ENCODE measurements at regions of chr10 and their contacts with region 1.

Region 1: GRCh38 chr10:6151087-6151977 is 51.4 kb upstream of the PFKFB3 start:
- DNase-seq: peak; percentile 51
- ATAC-seq: peak; percentile 86
- H3K4me3 ChIP-seq: peak overlapping the region; percentile 9
- H3K27ac ChIP-seq: peak overlapping the region; percentile 8; the same call in 1 of the 2 replicates
- H3K4me1 ChIP-seq: peaks cover 25% of the 10 kb centered on the region
- H3K27me3 ChIP-seq: no peaks in the 10 kb centered on the region
- CTCF ChIP-seq: peak; percentile 71 to 82 (median 81)
- EP300 ChIP-seq: no peak
- POLR2A ChIP-seq: no peak
- RAD21 ChIP-seq: peak; percentile 61

Region 2: GRCh38 chr10:6108603-6109443 is 42.5 kb before region 1 on chr10:
- CTCF ChIA-PET with region 1: interaction called, 53 read pairs
- POLR2A ChIA-PET with region 1: no interaction called
- RAD21 ChIA-PET with region 1: interaction called, 9 read pairs
- SMC1A ChIA-PET with region 1: interaction called, 28 read pairs
- in situ Hi-C with region 1: loop called (anchors 5 kb)
- intact Hi-C with region 1: loop called (anchors 1 kb)
- DNase-seq: no peak
- ATAC-seq: peak; percentile 72
- H3K4me3 ChIP-seq: no peak overlapping the region
- H3K27ac ChIP-seq: no peak overlapping the region
- H3K4me1 ChIP-seq: no peaks in the 10 kb centered on the region
- H3K27me3 ChIP-seq: no peaks in the 10 kb centered on the region
- CTCF ChIP-seq: peak; percentile 50 to 77 (median 74); a peak in 5 of 6 replicates
- EP300 ChIP-seq: no peak
- POLR2A ChIP-seq: no peak
- RAD21 ChIP-seq: peak; percentile 79

Region 3: DNA sequence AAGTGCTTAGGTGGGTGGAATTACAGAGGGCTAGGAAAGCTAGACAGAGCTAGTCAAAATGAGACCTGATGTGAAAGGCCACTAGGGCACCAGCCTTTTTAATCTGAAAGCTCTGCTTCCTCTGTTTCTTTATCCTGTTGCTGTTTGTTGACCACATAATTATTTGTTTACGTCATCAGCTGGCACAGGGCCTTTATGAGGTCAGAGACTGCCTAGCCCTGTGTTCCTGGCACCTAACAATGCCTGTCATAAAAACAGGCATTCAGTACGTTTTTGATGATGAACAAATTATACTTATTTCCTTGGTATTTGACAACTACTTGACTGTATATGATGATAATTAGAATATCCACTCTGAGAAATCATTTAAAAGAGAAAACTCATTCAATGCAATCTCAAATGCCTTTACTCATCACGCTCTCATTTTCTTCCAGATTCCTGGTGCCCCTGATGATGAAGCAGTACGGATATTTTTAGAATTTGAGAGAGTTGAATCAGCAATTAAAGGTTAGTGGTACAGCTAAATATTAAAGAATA is 36.5 kb before region 1 on chr10:
- CTCF ChIA-PET with region 1: interaction called, 53 read pairs
- POLR2A ChIA-PET with region 1: no interaction called
- RAD21 ChIA-PET with region 1: interaction called, 9 read pairs
- SMC1A ChIA-PET with region 1: interaction called, 28 read pairs
- in situ Hi-C with region 1: loop called (anchors 5 kb)
- intact Hi-C with region 1: no loop called
- DNase-seq: no peak
- ATAC-seq: peak; percentile 74
- H3K4me3 ChIP-seq: no peak overlapping the region
- H3K27ac ChIP-seq: no peak overlapping the region
- H3K4me1 ChIP-seq: no peaks in the 10 kb centered on the region
- H3K27me3 ChIP-seq: no peaks in the 10 kb centered on the region
- CTCF ChIP-seq: no peak
- EP300 ChIP-seq: no peak
- POLR2A ChIP-seq: no peak
- RAD21 ChIP-seq: no peak

Region 4: GRCh38 chr10:6128591-6129251 is 22.6 kb before region 1 on chr10:
- CTCF ChIA-PET with region 1: interaction called, 47 read pairs
- POLR2A ChIA-PET with region 1: interaction called, 4 read pairs
- RAD21 ChIA-PET with region 1: interaction called, 8 read pairs
- SMC1A ChIA-PET with region 1: interaction called, 47 read pairs
- in situ Hi-C with region 1: no loop called
- intact Hi-C with region 1: no loop called
- DNase-seq: no peak
- ATAC-seq: no peak
- H3K4me3 ChIP-seq: no peak overlapping the region
- H3K27ac ChIP-seq: no peak overlapping the region
- H3K4me1 ChIP-seq: peaks cover 24% of the 10 kb centered on the region
- H3K27me3 ChIP-seq: no peaks in the 10 kb centered on the region
- CTCF ChIP-seq: no peak
- EP300 ChIP-seq: no peak
- POLR2A ChIP-seq: no peak
- RAD21 ChIP-seq: no peak

Region 5: DNA sequence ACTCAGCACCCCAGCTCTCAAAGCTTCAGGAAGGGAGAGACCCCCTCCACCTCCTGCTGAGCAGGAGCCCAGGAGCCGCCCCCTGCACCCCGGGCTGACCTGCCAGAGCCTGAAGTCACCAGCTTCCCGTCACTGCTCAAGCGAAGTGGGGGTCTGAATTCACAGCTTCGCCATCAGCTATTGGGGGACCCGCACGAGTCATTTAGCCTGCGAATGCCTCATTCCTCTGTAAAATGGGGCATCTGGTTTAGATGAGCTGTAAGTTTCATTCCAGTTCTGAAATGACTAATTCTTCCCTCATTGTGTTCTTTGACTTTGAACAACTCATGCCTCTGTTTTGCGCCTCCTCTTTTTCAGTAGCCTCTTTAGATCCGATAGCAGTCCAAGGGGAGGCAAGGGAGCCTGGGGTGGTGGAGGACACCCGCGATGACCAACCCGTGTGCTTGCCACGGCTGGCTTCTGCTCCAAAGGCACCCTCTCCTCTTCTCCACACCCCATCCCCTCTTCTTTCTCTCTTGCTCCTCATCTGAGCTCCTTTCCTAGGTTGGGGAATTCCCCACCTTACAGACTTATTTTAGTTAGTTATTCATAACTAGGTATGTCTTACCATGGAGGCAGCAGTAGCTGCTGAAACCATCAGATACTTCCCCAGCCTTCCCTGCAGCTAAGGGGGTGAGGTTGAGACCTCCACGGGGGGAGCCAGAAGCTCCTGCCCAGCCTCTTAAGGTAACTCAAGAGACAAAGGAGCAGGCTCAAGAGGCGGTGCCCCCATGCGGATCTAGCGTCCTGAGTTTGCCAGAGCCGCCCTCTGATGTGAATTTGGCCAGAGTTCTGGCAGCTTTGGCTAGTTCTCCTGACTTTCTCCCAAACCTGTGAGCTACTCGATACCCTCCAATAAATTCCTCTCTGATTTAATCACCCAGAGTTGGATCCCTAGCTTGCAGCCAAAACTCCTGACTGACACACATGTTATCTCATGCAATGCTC is 14.8 kb before region 1 on chr10:
- CTCF ChIA-PET with region 1: interaction called, 50 read pairs
- POLR2A ChIA-PET with region 1: interaction called, 18 read pairs
- RAD21 ChIA-PET with region 1: interaction called, 69 read pairs
- SMC1A ChIA-PET with region 1: interaction called, 47 read pairs
- in situ Hi-C with region 1: no loop called
- intact Hi-C with region 1: no loop called
- DNase-seq: peak; percentile 66
- ATAC-seq: peak; percentile 71
- H3K4me3 ChIP-seq: peak overlapping the region; percentile 54
- H3K27ac ChIP-seq: peak overlapping the region; percentile 63
- H3K4me1 ChIP-seq: peaks cover 38% of the 10 kb centered on the region
- H3K27me3 ChIP-seq: no peaks in the 10 kb centered on the region
- CTCF ChIP-seq: 0 out of 6 replicates have a peak, but pooled peaks of 1 of the 3 experiments have one; percentile 1
- EP300 ChIP-seq: peak in 1 of 2 experiments; percentile 74; a peak in 2 of 4 replicates
- POLR2A ChIP-seq: no peak
- RAD21 ChIP-seq: no peak

Region 6: GRCh38 chr10:6163364-6164270 is 12.3 kb after region 1 on chr10:
- CTCF ChIA-PET with region 1: interaction called, 32 read pairs
- POLR2A ChIA-PET with region 1: interaction called, 6 read pairs
- RAD21 ChIA-PET with region 1: interaction called, 5 read pairs
- SMC1A ChIA-PET with region 1: interaction called, 5 read pairs
- in situ Hi-C with region 1: no loop called
- intact Hi-C with region 1: no loop called
- DNase-seq: peak; percentile 47
- ATAC-seq: peak; percentile 99
- H3K4me3 ChIP-seq: peak overlapping the region; percentile 67
- H3K27ac ChIP-seq: peak overlapping the region; percentile 83
- H3K4me1 ChIP-seq: no peaks in the 10 kb centered on the region; the same call in 1 of the 2 replicates
- H3K27me3 ChIP-seq: no peaks in the 10 kb centered on the region
- CTCF ChIP-seq: no peak
- EP300 ChIP-seq: no peak
- POLR2A ChIP-seq: peak; percentile 85
- RAD21 ChIP-seq: no peak